ENCODE measurements at regions of chr9 and their contacts with region 1.

Region 1: GRCh38 chr9:131349881-131350563 is 43.9 kb upstream of the PRRC2B start:
- DNase-seq: peak; percentile 65
- H3K4me3 ChIP-seq: peak overlapping the region; percentile 55
- H3K27ac ChIP-seq: no peak overlapping the region
- H3K27me3 ChIP-seq: peaks cover 2% of the 10 kb centered on the region
- CTCF ChIP-seq: peak; percentile 86

Region 2: DNA sequence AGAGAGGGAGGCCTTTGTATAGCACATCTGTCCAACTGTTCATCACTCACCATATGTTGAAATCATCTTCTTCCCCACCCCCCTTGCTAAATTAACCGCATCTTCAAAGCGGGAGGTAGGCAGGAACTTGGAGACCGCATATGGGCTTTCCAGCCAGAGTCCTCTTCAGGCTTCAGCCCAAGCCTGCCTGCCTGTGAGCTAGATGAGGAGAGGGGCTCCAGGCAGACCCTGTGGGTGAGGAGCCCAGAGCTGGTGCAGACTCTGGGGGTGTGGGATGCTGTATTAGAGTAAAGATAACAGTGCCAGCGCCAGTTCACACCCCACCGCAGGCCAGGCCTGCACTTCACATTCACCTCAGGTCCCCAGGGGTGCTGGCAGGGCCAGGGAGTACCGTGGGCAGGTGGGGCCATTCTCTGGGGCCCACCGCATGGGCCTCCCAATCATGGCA is 60.0 kb after region 1 on chr9:
- CTCF ChIA-PET with region 1: interaction called, 17 read pairs
- POLR2A ChIA-PET with region 1: interaction called, 3 read pairs
- DNase-seq: no peak
- H3K4me3 ChIP-seq: peak overlapping the region; percentile 17; the same call in 1 of the 2 replicates
- H3K27ac ChIP-seq: no peak overlapping the region
- H3K27me3 ChIP-seq: no peaks in the 10 kb centered on the region
- CTCF ChIP-seq: no peak

Region 3: DNA sequence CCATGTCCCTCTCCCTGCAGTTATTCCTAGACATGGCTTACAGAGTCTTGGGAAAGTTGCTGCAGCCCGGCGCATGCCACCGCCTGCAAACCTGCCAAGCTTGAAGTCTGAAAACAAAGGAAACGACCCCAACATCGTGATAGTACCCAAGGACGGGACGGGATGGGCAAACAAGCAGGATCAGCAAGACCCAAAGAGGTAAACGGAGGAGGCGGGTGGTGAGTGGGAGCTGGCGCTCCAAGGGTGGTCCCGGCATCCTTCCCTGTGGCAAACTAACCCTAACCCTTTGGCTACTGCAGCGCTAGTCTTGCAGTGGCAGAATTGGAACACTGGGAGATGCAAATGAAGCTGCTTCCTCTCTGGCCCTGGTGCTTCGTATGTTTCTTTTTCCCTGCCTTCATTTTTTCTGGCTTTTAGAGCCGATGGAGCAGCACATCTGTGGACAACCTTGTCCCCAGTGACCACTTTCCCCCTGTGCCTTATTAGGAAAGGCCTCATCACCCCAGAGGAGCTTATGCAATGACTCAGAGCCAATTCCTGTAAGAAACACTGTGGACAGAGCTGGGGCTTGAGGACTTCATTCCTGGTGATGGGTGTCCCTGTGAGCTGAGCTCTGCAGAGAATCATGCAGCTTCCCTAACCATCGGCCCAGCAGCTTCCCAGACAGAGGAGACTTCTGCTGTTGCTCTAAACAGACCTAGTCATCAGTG is 82.7 kb after region 1 on chr9:
- CTCF ChIA-PET with region 1: interaction called, 14 read pairs
- POLR2A ChIA-PET with region 1: no interaction called
- DNase-seq: peak; percentile 77
- H3K4me3 ChIP-seq: no peak overlapping the region
- H3K27ac ChIP-seq: peak overlapping the region; percentile 81
- H3K27me3 ChIP-seq: no peaks in the 10 kb centered on the region
- CTCF ChIP-seq: no peak

Region 4: DNA sequence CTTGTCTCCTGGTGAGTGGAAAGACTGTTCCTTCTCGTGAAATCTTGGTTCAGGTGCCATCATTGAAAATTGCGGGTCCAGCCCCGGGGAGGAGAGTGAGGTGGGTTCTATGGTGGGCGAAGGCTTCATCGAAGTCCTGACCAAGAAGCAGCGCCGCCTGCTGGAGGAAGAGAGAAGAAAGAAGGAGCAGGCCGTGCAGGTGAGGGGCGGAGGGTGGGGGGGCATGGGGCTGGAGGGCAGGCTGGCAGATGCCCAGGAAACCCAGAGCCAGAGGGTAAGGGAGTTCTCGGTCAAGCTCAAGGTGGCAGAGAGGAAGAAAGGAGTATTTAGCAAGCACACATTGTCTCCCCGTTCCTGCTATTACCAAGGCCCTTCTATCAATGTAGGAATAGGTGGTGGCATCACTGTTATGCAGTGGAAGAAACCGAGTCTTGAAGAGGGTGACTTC is 128.4 kb after region 1 on chr9:
- CTCF ChIA-PET with region 1: interaction called, 38 read pairs
- POLR2A ChIA-PET with region 1: no interaction called
- DNase-seq: no peak
- H3K4me3 ChIP-seq: no peak overlapping the region
- H3K27ac ChIP-seq: no peak overlapping the region
- H3K27me3 ChIP-seq: no peaks in the 10 kb centered on the region
- CTCF ChIP-seq: peak; percentile 59

Measured in AG04450 (cell line).